Naive thymus-derived CD8-positive, alpha-beta T cell (primary cell): ENCODE measurements at regions of chr1 and their contacts with region 1.

Region 1: DNA sequence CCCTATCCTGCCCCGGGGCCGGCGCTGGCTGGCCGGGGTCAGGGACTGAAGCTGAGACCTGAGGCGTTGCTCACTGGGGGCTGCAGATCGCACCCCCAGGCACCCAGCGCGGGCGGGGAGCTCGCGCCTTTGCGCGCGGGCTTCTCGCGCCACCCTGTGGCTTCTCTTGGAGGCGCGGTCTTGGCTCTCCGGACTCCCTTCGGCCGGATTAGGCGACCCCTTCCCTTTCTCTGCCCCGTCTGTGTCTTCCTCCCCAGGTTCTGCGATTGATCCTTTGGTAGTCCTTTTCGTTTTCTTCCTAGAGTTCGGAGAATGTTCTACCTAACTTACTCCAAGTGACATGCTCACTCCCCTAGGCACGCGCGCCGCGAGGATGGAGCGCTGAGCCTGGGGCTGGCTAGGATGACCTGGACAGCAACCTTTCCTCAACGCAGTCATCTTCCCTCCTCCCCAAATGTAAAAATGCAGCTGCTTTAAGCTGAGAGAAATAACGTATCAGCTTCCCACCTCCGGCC is 495 bp upstream of the NTRK1 start:
- DNase-seq: peak; percentile 27 to 69 (median 56)
- ATAC-seq: peak; percentile 65 to 69
- H3K4me3 Mint-ChIP-seq: peak overlapping the region; percentile 72 to 92 (median 83)
- H3K27ac Mint-ChIP-seq: peak overlapping the region in 5 of 10 donors; percentile 14 to 69 (median 64)
- H3K4me1 Mint-ChIP-seq: peaks cover 11 to 37% (median 28%) of the 10 kb centered on the region in 4 donors
- H3K27me3 Mint-ChIP-seq: peaks cover 21 to 69% (median 43%) of the 10 kb centered on the region in 5 donors

Region 2: DNA sequence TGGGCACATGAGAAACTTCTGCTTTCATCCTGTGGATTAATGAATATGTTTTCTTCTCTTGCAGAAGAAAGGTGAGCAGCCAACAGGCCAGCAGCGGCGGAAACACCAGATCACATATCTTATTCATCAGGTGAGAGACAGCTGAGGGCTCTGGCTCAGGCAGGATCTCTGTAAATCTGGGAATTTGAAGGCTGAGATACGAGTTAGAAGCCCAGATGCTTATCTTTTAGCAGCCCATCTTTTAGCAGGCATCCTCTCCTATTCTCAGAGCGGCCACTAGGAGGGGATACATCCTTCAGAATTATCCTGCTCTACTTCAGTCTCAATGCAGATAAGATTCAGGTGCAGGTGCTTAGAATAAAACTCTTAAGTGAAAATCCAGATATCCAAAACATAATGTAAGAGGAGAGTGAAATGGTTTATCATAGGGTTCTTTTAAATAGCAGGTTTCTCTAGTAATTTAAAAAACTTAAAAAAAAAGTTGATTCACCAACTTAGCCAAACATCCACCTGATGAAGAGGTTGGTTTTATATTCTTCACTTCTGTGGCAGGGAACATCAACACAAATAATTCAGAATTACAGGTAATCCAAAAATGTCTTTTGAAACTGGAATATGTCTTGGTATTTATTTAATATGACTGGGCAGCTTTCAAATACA is 62.8 kb before region 1 on chr1:
- POLR2A ChIA-PET with region 1: interaction called, 13 read pairs
- DNase-seq: peak; percentile 25 to 77 (median 64)
- ATAC-seq: peak; percentile 88 to 92
- H3K4me3 Mint-ChIP-seq: no peak overlapping the region
- H3K27ac Mint-ChIP-seq: peak overlapping the region in 3 of 10 donors; percentile 8 to 42 (median 17)
- H3K4me1 Mint-ChIP-seq: peaks cover 3 to 14% (median 5%) of the 10 kb centered on the region in 4 donors
- H3K27me3 Mint-ChIP-seq: no peaks in the 10 kb centered on the region

Region 3: DNA sequence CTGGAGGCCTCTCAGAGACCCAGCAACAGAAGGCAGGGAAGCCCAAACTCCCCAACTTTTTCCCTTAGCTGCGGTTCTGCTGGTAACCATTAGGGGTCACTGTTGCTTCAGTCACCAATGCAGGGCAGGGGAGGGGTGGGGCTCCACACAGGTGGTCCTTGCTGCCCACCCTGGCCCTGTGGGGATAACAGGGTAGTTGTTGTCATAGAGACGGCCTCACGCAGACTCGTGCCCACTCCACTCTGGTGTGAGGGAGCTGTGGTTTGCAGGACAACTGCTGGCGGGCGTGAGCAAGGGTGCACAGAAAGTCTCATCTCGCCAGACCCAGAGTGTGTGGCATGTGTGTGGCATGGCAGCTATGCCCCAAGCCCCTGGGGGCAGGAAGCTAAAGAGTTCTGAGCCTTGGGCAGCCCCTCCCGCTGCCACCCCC is 21.2 kb before region 1 on chr1:
- POLR2A ChIA-PET with region 1: interaction called, 13 read pairs
- DNase-seq: peak in 9 of 10 donors; percentile 29 to 77 (median 57)
- ATAC-seq: peak; percentile 79 to 85
- H3K4me3 Mint-ChIP-seq: no peak overlapping the region
- H3K27ac Mint-ChIP-seq: peak overlapping the region in 5 of 10 donors; percentile 44 to 87 (median 61)
- H3K4me1 Mint-ChIP-seq: peaks cover 5 to 17% (median 11%) of the 10 kb centered on the region in 4 donors
- H3K27me3 Mint-ChIP-seq: peaks cover 22 to 57% (median 42%) of the 10 kb centered on the region in 5 donors

Region 4: GRCh38 chr1:156848461-156849150 is 11.6 kb before region 1 on chr1:
- POLR2A ChIA-PET with region 1: interaction called, 12 read pairs
- DNase-seq: peak; percentile 48 to 89 (median 68)
- ATAC-seq: peak; percentile 86 to 89
- H3K4me3 Mint-ChIP-seq: peak overlapping the region; percentile 50 to 78 (median 69)
- H3K27ac Mint-ChIP-seq: peak overlapping the region in 8 of 10 donors; percentile 59 to 93 (median 88)
- H3K4me1 Mint-ChIP-seq: peaks cover 13 to 37% (median 35%) of the 10 kb centered on the region in 4 donors
- H3K27me3 Mint-ChIP-seq: peaks cover 3 to 29% (median 10%) of the 10 kb centered on the region in 5 donors